Gastrocnemius medialis (tissue), 4 donors: ENCODE measurements at regions of chr20 and their contacts with region 1.

Region 1: DNA sequence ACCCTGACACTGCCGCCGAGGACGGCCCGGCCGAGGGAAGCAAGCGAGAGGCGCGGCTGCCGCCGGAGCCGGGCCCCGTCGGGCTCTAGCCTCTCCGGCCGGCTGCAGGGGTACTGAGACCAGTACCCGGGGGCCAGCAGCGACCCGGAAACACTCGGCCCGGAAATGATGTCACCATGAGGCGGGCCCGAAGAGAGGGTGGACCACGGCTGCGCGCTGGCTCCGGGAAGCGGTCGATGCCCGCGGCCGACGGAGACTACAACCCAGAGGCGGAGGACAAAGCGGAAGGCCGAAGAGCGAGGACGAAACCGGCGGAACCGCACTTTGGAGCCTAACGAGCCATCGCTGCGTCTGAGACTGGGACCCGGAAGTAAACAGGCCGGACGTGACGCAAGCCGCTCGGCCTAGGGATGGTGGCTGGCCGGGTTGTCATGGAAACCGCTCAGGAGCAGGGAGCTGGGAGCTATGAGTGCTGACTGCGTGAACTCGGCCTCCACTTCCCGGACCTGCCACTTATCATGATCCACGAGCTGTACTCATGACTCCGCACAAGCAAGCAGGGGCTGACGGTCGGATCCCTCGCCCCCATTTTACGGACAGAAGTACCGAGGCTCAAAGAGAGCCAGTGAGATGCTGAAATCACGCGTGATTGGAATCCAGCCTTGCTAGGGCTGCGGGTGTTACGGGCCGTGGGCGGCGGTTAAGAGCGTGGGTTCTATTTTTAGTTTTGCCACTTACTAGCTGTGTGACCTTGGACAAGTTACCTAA is at the start of gene SPATA2:
- DNase-seq: peak; percentile 91 to 92
- ATAC-seq: peak; percentile 89 to 92
- H3K4me3 ChIP-seq: peak within 1 kb of the TSS; percentile 84 to 99 (median 92)
- H3K27ac ChIP-seq: peak within 1 kb of the TSS; percentile 94 to 100 (median 96)
- H3K4me1 ChIP-seq: peaks cover 34 to 45% of the 10 kb centered on the region in 2 donors
- H3K27me3 ChIP-seq: no peaks in the 10 kb centered on the region
- CTCF ChIP-seq: no peak
- POLR2A ChIP-seq: peak; percentile 88 to 89
- total RNA-seq, gene SPATA2: 7.7 to 10.7 (median 9.7) TPM

Region 2: DNA sequence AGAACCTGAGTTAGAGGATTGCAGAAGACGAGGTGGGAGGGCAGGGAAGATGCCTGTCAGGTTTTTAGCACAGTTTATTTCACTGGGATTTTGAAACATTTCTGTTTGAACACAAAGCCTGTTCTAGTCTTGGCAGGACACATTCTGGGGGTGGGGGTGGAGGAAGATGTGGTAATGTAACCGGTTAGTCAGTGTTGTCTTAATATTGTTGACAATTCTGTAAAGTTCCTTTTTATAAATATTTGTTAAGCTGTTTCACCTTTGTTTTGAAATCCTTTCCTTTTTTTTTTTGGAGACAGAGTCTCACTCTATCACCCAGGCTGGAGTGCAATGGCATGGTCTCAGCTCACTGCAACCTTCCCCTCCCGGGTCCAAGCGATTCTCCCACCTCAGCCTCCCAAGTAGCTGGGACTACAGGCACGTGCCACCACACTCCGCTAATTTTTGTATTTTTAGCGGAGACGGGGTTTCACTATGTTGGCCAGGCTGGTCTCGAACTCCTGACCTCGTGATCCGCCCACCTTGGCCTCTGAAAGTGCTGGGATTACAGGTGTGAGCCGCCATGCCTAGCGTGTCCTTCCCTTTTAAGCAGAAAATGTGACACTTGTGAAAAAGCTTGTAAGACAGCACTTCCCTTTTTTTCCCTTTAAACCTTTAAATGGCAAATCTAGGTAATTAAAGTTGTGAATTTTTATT is 82.8 kb before region 1 on chr20:
- in situ Hi-C with region 1: no loop called
- intact Hi-C with region 1: no loop called
- DNase-seq: peak in 1 of 2 donors; percentile 48
- ATAC-seq: peak; percentile 41 to 60
- H3K4me3 ChIP-seq: no peak overlapping the region
- H3K27ac ChIP-seq: peak overlapping the region; percentile 18 to 61 (median 36)
- H3K4me1 ChIP-seq: no peaks in the 10 kb centered on the region
- H3K27me3 ChIP-seq: no peaks in the 10 kb centered on the region
- CTCF ChIP-seq: no peak
- POLR2A ChIP-seq: no peak

Region 3: DNA sequence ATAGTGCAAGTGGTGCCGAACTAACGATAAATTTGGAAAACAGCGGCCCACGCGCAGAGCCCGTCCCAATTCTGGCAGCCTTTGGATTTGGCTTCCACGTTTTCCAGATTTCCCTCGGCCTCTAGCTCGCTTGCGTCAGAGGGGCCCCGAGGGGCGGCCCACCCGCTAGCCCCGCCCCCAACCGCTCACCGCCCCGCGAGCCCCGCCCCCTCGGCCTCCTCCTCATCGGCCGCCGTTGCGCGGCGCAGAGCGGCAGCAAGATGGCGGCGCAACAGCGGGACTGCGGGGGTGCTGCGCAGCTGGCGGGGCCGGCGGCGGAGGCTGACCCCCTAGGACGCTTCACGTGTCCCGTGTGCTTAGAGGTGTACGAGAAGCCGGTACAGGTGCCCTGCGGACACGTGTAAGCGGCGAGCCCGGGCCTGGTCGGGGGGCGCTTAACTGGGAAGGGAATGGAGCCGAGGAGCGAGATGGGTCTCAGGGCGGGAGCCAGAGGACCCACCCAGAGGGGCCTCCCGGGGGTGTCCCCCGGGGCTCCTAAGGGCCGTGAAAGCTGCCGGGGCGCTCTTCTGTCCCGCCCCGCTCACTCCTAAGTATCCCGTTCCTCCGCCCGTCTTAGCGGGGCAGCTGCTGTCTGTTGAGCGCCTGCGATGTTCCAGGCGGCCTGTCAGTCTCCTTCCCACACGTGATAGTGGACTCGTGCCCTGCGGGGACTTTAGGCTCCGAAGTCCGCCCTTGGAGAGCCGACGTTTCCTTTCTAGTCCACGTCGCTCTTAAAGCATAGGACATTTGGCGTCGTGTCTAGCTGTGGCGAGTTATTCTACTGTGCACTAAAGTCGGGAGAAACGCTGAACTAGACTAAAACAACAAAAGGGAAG is 20.8 kb after region 1 on chr20 and contains the start of gene RNF114:
- in situ Hi-C with region 1: no loop called
- intact Hi-C with region 1: loop called (anchors 2 kb)
- DNase-seq: peak; percentile 88 to 89
- ATAC-seq: peak; percentile 84 to 87
- H3K4me3 ChIP-seq: peak within 1 kb of the TSS; percentile 88 to 99 (median 96)
- H3K27ac ChIP-seq: peak within 1 kb of the TSS; percentile 95 to 100 (median 98)
- H3K4me1 ChIP-seq: peaks cover 44 to 45% of the 10 kb centered on the region in 2 donors
- H3K27me3 ChIP-seq: no peaks in the 10 kb centered on the region
- CTCF ChIP-seq: peak in 2 of 5 experiments; percentile 16 to 21
- POLR2A ChIP-seq: peak; percentile 98 to 99
- total RNA-seq, gene RNF114: 133 to 216 (median 172) TPM